ENCODE measurements at regions of chr16 and their contacts with region 1.

Region 1: GRCh38 chr16:67017810-67018488 is 11.0 kb upstream of the CBFB start:
- H3K4me3 ChIP-seq: no peak overlapping the region
- H3K27ac ChIP-seq: no peak overlapping the region
- H3K4me1 ChIP-seq: no peaks in the 10 kb centered on the region; the same call in 1 of the 2 replicates
- CTCF ChIP-seq: peak; percentile 88

Region 2: DNA sequence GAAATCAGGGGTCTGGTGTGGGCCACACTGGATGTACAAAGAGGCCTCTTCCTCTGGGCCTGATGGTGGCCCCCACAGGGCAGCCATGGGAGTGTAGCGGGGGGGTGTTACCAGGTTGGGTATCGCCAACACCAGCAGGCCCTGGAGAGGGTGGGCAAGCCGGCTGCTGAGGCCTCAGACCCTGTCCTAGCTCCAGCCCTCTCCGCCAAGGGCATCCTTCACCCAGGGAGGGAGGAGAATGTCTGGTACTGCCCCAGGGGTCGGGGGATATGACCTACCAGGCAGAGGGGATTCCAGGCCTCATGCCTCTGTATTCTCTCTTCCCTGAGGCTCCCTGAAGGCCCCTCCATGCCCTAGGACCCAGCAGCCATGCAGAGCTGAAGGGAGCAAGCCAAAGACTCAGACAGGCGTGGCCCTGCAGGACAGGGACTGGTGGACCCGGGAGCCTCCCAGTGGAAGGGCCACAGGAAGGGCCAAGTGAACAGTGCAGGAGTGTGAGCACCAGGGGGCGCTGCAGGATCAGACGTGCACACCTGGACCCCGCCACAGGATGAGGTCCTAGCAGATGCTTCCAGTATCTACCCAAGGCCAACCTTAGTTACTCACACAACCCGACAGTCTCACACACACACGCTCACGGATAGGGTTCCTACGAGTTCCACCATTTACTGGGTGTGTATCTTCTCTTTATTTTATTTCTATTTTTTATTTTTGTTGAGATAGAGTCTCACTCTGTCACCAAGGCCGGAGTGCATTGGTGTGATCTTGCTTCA is 40.4 kb before region 1 on chr16:
- CTCF ChIA-PET with region 1: interaction called, 16 read pairs
- POLR2A ChIA-PET with region 1: no interaction called
- H3K4me3 ChIP-seq: no peak overlapping the region
- H3K27ac ChIP-seq: no peak overlapping the region
- H3K4me1 ChIP-seq: no peaks in the 10 kb centered on the region
- CTCF ChIP-seq: peak; percentile 98

Region 3: GRCh38 chr16:67028555-67029248 is 10.8 kb after region 1 on chr16 and contains the start of gene CBFB:
- CTCF ChIA-PET with region 1: interaction called, 25 read pairs
- POLR2A ChIA-PET with region 1: interaction called, 15 read pairs
- H3K4me3 ChIP-seq: peak within 1 kb of the TSS; percentile 84
- H3K27ac ChIP-seq: peak within 1 kb of the TSS; percentile 79
- H3K4me1 ChIP-seq: peaks cover 5% of the 10 kb centered on the region; the same call in 1 of the 2 replicates
- CTCF ChIP-seq: peak; percentile 69

Region 4: GRCh38 chr16:67104061-67104460 is 86.1 kb after region 1 on chr16:
- CTCF ChIA-PET with region 1: interaction called, 104 read pairs
- POLR2A ChIA-PET with region 1: no interaction called
- H3K4me3 ChIP-seq: no peak overlapping the region
- H3K27ac ChIP-seq: no peak overlapping the region
- H3K4me1 ChIP-seq: peaks cover 5% of the 10 kb centered on the region; the same call in 1 of the 2 replicates
- CTCF ChIP-seq: no peak

Region 5: GRCh38 chr16:67159593-67160406 is 141.9 kb after region 1 on chr16 and contains the starts of genes FBXL8 and TRADD:
- CTCF ChIA-PET with region 1: interaction called, 155 read pairs
- POLR2A ChIA-PET with region 1: interaction called, 10 read pairs
- H3K4me3 ChIP-seq: peak within 1 kb of the TSS; percentile 75
- H3K27ac ChIP-seq: no peak within 1 kb of the TSS; the same call in 1 of the 2 replicates
- H3K4me1 ChIP-seq: no peaks in the 10 kb centered on the region
- CTCF ChIP-seq: peak; percentile 75